ENCODE measurements at regions of chr10 and their contacts with region 1.

Region 1: GRCh38 chr10:62816331-62817120 is at the start of gene EGR2:
- DNase-seq: peak; percentile 94
- H3K4me3 Mint-ChIP-seq: peak within 1 kb of the TSS; percentile 97
- H3K27ac Mint-ChIP-seq: peak within 1 kb of the TSS; percentile 100
- H3K4me1 Mint-ChIP-seq: peaks cover 45% of the 10 kb centered on the region
- H3K27me3 Mint-ChIP-seq: peaks cover 22% of the 10 kb centered on the region
- total RNA-seq, gene EGR2: 126 and 137 TPM in 2 replicates

Region 2: GRCh38 chr10:62528441-62528840 is 288.1 kb before region 1 on chr10:
- intact Hi-C with region 1: loop called (anchors 5 kb)
- DNase-seq: no peak
- H3K4me3 Mint-ChIP-seq: peak overlapping the region; percentile 1
- H3K27ac Mint-ChIP-seq: peak overlapping the region; percentile 23
- H3K4me1 Mint-ChIP-seq: peaks cover 33% of the 10 kb centered on the region
- H3K27me3 Mint-ChIP-seq: peaks cover 14% of the 10 kb centered on the region

Region 3: GRCh38 chr10:62637249-62638061 is 179.1 kb before region 1 on chr10:
- intact Hi-C with region 1: loop called (anchors 1 kb)
- DNase-seq: peak; percentile 75
- H3K4me3 Mint-ChIP-seq: no peak overlapping the region
- H3K27ac Mint-ChIP-seq: no peak overlapping the region
- H3K4me1 Mint-ChIP-seq: peaks cover 37% of the 10 kb centered on the region
- H3K27me3 Mint-ChIP-seq: no peaks in the 10 kb centered on the region

Region 4: GRCh38 chr10:62851442-62851841 is 34.9 kb after region 1 on chr10:
- intact Hi-C with region 1: loop called (anchors 1 kb)
- DNase-seq: no peak
- H3K4me3 Mint-ChIP-seq: no peak overlapping the region
- H3K27ac Mint-ChIP-seq: peak overlapping the region; percentile 28
- H3K4me1 Mint-ChIP-seq: peaks cover 59% of the 10 kb centered on the region
- H3K27me3 Mint-ChIP-seq: no peaks in the 10 kb centered on the region

Region 5: GRCh38 chr10:62946278-62946677 is 129.8 kb after region 1 on chr10:
- intact Hi-C with region 1: no loop called
- DNase-seq: no peak
- H3K4me3 Mint-ChIP-seq: no peak overlapping the region
- H3K27ac Mint-ChIP-seq: no peak overlapping the region
- H3K4me1 Mint-ChIP-seq: no peaks in the 10 kb centered on the region
- H3K27me3 Mint-ChIP-seq: peaks cover 7% of the 10 kb centered on the region

Region 6: DNA sequence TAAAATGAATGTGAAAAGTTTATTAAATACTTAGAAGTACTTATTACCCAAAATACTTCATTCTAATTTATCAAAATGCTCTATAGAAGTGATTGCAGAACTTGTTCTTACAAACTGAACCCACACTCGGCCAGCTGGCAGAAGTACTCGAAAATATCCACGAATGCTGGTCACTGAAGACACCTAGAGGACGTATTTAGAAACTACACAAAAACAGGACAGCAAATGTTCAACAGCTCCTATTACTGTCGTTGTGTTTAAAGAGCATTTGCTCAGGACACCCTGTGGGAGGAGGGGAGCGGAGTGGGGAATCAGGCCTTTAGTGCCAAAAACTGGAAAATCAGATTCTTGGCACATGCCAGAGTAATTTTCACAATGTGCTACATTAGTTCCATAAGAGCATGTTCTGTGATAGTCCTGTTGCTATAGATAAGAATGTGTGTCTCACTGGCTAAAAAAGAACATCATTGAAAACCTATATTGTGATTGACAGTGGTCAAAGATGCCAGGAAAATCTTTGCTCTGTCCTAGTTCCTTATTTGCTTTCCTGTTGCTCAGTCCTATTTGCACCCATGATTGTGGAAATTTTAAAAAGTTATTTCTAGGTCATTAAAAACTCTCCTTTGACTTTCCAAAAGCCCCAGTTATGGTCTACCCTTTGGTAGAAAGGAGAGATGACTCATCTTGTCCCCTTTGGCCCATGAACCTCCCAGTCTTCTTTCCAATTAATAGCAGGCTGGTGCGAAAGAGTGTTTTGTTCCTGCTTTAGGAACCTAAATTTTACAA is 267.6 kb after region 1 on chr10:
- intact Hi-C with region 1: loop called (anchors 1 kb)
- DNase-seq: peak; percentile 16
- H3K4me3 Mint-ChIP-seq: no peak overlapping the region
- H3K27ac Mint-ChIP-seq: no peak overlapping the region
- H3K4me1 Mint-ChIP-seq: peaks cover 12% of the 10 kb centered on the region
- H3K27me3 Mint-ChIP-seq: peaks cover 23% of the 10 kb centered on the region

Region 7: DNA sequence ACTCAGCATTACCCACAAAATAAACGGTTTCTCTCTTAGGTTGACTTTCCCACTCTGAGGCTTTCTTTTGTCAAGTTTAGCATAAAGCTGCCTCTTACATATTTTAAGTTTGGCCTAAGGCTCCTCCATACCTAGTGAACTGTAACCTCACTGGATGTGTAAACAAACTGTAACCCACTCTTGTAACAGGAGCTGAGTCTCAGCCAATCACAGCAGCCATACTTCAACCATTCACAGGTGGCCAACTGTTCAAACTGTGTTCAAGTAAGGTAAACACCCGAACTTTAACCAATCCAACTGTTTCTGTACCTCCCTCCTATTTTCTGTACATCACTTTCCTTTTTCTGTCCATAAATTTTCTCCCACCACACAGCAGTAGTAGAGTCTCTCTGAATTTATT is 308.9 kb after region 1 on chr10:
- intact Hi-C with region 1: no loop called
- DNase-seq: no peak
- H3K4me3 Mint-ChIP-seq: no peak overlapping the region
- H3K27ac Mint-ChIP-seq: no peak overlapping the region
- H3K4me1 Mint-ChIP-seq: no peaks in the 10 kb centered on the region
- H3K27me3 Mint-ChIP-seq: peaks cover 3% of the 10 kb centered on the region

Region 8: DNA sequence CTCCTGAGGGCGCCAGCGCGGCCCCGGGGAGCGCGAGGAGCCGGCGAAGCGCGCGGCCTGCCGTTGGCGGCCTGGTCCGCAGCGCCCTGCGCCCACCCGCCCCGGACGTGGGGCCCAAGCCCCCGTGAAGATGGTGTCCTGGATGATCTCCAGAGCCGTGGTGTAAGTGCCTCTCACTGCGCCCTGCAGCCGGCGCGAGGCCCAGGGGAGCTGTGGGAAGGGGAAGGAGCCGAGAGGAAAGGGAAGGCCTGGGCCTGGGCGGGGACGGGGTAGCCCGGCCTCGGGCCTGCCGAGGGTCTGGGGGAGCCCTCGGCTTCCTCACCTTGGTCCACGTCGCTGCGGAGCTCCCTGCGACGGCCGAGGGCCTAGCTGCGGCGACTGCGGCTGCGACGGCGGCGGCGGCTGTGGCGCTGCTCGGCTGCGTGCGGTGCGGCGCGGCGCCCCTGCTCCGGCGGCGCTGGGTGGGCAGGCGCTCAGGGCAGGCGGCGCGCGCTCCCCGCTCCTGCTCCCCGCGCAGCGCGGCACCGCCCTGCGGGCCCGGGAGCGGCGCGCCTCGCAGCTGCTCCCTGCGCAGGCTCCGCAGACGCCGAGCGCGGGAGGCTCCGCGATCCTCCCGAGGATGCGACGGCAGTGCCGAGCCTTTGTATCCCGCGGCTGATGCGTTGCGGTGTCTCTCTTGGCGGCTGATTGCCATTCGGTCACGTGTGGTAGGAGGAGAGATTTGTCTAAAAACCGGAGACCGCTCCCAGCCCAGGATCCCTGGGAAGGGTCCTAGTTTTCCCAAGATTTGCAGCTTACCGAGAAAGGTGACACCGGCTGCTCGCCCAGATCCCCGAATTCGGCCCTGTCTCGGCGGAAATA is 705.1 kb after region 1 on chr10:
- intact Hi-C with region 1: loop called (anchors 5 kb)
- DNase-seq: peak; percentile 42
- H3K4me3 Mint-ChIP-seq: peak overlapping the region; percentile 79
- H3K27ac Mint-ChIP-seq: peak overlapping the region; percentile 81
- H3K4me1 Mint-ChIP-seq: peaks cover 51% of the 10 kb centered on the region
- H3K27me3 Mint-ChIP-seq: no peaks in the 10 kb centered on the region

Measured in activated T-helper 2 cell treated with anti-CD3 and anti-CD28 coated beads, Interferon-gamma antibody, Interleukin-2, Interleukin-4, amounts not matched to agents 10 μg/mL and 5 μg/mL and 100 μg/mL, durations not matched to agents 14 hours and 24 hours and 36 hours (primary cell).